ENCODE measurements at regions of chr4 and their contacts with region 1.

Region 1: GRCh38 chr4:151362404-151363164 is 37.2 kb upstream of the SH3D19 start:
- DNase-seq: peak; percentile 50 to 83 (median 72)
- ATAC-seq: peak; percentile 100
- H3K4me3 ChIP-seq: no peak overlapping the region
- H3K4me3 Mint-ChIP-seq: no peak overlapping the region
- H3K27ac ChIP-seq: no peak overlapping the region
- H3K27ac Mint-ChIP-seq: no peak overlapping the region
- H3K4me1 ChIP-seq: no peaks in the 10 kb centered on the region
- H3K4me1 Mint-ChIP-seq: peaks cover 4% of the 10 kb centered on the region
- H3K27me3 ChIP-seq: no peaks in the 10 kb centered on the region
- H3K27me3 Mint-ChIP-seq: peaks cover 4% of the 10 kb centered on the region
- CTCF ChIP-seq: peak; percentile 83

Region 2: DNA sequence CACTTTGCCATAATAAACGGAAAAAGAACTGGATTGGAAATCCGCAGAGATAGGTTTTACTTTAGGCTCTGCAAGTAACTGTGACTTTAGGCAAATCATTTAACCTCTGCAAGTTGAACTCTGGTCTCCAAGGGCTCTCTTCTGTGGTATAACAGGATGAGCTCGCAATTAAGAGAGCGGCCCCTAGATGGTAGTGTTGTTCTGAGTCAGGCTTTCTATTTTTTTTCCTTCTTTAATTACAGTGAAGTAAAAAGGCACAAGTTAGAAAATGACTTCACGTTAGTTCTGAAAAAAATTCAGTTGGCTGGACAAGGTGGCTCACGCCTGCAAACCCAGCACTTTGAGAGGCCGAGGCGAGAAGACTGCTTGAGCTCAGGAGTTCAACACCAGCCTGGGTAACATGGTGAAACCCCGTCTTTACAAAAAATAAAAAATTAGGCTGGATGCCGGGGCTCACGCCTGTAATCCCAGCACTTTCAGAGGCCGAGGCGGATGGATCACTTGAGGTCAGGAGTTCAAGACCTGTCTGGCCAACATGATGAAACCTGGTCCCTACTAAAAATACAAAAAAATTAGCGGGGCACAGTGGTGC is 245.1 kb before region 1 on chr4:
- CTCF ChIA-PET with region 1: no interaction called
- POLR2A ChIA-PET with region 1: no interaction called
- intact Hi-C with region 1: loop called in 1 of 2 experiments (anchors 1 kb)
- DNase-seq: peak in 8 of 9 experiments; percentile 24 to 65 (median 50)
- ATAC-seq: peak; percentile 80
- H3K4me3 ChIP-seq: no peak overlapping the region
- H3K4me3 Mint-ChIP-seq: no peak overlapping the region
- H3K27ac ChIP-seq: no peak overlapping the region
- H3K27ac Mint-ChIP-seq: no peak overlapping the region
- H3K4me1 ChIP-seq: no peaks in the 10 kb centered on the region
- H3K4me1 Mint-ChIP-seq: peaks cover 1% of the 10 kb centered on the region
- H3K27me3 ChIP-seq: no peaks in the 10 kb centered on the region
- H3K27me3 Mint-ChIP-seq: no peaks in the 10 kb centered on the region
- CTCF ChIP-seq: peak; percentile 86

Region 3: GRCh38 chr4:151604238-151604637 is 241.7 kb after region 1 on chr4:
- CTCF ChIA-PET with region 1: interaction called, 3 read pairs
- POLR2A ChIA-PET with region 1: no interaction called
- intact Hi-C with region 1: loop called in 1 of 2 experiments (anchors 10 kb)
- DNase-seq: no peak
- ATAC-seq: no peak
- H3K4me3 ChIP-seq: no peak overlapping the region
- H3K4me3 Mint-ChIP-seq: no peak overlapping the region
- H3K27ac ChIP-seq: no peak overlapping the region
- H3K27ac Mint-ChIP-seq: no peak overlapping the region
- H3K4me1 ChIP-seq: no peaks in the 10 kb centered on the region
- H3K4me1 Mint-ChIP-seq: no peaks in the 10 kb centered on the region
- H3K27me3 ChIP-seq: no peaks in the 10 kb centered on the region
- H3K27me3 Mint-ChIP-seq: peaks cover 2% of the 10 kb centered on the region
- CTCF ChIP-seq: no peak

Region 4: DNA sequence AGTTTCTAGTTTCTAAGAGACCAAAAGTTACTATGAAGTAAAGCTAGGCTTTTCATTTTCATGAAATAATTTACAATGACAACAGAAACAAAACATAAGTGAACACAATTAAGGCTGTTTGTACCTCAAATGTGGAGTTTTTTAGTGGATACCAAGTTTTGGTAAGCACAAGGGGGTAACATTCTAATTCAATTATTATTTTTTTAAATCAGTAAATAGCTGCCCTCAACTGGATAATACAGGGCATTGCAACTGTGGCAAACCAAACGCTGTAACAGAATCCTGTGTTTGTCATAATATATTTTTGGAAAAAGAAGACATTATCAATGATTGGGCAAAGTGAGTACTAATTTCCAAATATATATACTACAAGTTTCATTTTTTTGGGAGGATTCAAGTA is 1023.0 kb after region 1 on chr4:
- CTCF ChIA-PET with region 1: no interaction called
- POLR2A ChIA-PET with region 1: no interaction called
- intact Hi-C with region 1: loop called (anchors 1 to 5 kb)
- DNase-seq: peak in 1 of 9 experiments; percentile 29
- ATAC-seq: no peak
- H3K4me3 ChIP-seq: no peak overlapping the region
- H3K4me3 Mint-ChIP-seq: no peak overlapping the region
- H3K27ac ChIP-seq: no peak overlapping the region
- H3K27ac Mint-ChIP-seq: no peak overlapping the region
- H3K4me1 ChIP-seq: peaks cover 12% of the 10 kb centered on the region
- H3K4me1 Mint-ChIP-seq: peaks cover 32% of the 10 kb centered on the region
- H3K27me3 ChIP-seq: no peaks in the 10 kb centered on the region
- H3K27me3 Mint-ChIP-seq: no peaks in the 10 kb centered on the region
- CTCF ChIP-seq: peak; percentile 62

Region 5: DNA sequence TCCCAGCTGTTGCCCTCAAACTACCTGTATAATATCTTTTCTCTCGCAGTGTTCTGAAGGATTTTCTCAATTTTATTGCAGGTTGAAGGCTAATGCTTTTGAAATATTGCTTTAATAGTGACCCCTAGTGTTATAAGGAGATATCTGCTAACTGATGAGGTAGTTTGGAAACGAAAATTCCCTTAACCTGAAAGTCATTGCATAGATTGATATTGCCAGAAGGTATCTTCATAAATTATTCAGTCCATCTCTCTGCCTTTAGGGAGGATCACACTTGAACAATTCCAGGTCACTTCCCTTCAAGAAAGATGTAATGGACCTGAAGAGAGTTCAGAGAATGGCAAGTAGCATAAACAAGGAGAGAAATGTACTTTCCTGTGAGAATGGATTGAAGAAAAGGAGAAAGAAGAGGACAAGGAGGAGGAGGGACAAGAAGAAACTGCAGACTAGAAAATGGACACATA is 1372.8 kb after region 1 on chr4:
- CTCF ChIA-PET with region 1: no interaction called
- POLR2A ChIA-PET with region 1: no interaction called
- intact Hi-C with region 1: loop called in 1 of 2 experiments (anchors 10 kb)
- DNase-seq: peak in 2 of 9 experiments; percentile 32 to 45
- ATAC-seq: peak; percentile 38
- H3K4me3 ChIP-seq: no peak overlapping the region
- H3K4me3 Mint-ChIP-seq: no peak overlapping the region
- H3K27ac ChIP-seq: no peak overlapping the region
- H3K27ac Mint-ChIP-seq: no peak overlapping the region
- H3K4me1 ChIP-seq: no peaks in the 10 kb centered on the region
- H3K4me1 Mint-ChIP-seq: no peaks in the 10 kb centered on the region
- H3K27me3 ChIP-seq: no peaks in the 10 kb centered on the region
- H3K27me3 Mint-ChIP-seq: no peaks in the 10 kb centered on the region
- CTCF ChIP-seq: peak; percentile 10

Measured in CD8-positive, alpha-beta T cell (primary cell).